AG04450 (cell line): ENCODE measurements at regions of chr1 and their contacts with region 1.

Region 1: DNA sequence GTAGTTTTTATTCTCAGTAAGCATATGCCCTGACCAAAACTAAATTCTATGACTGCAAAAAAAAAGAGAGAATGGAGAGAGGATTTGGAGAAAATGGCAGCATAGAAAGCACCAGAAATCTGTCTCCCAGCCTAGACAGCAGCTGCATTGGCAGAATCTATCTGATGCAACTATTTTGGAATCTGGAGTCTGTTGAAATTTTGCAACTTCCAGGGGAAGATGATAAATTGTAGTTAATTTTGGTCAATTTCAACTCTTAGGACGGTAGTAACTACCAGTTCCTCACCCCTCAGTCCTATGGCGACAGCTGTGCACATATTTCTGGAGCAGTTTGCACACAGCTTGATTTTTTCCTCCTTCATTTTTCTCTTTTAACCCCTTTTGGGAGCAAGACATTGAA is 10.9 kb downstream of the EXO5 start:
- DNase-seq: no peak
- H3K4me3 ChIP-seq: no peak overlapping the region
- H3K27ac ChIP-seq: no peak overlapping the region
- H3K27me3 ChIP-seq: no peaks in the 10 kb centered on the region
- CTCF ChIP-seq: no peak

Region 2: GRCh38 chr1:40531381-40532061 is 12.0 kb after region 1 on chr1 and contains the start of gene ZNF684:
- CTCF ChIA-PET with region 1: interaction called, 11 read pairs
- POLR2A ChIA-PET with region 1: no interaction called
- DNase-seq: peak; percentile 85
- H3K4me3 ChIP-seq: peak within 1 kb of the TSS; percentile 89
- H3K27ac ChIP-seq: peak within 1 kb of the TSS; percentile 77
- H3K27me3 ChIP-seq: no peaks in the 10 kb centered on the region
- CTCF ChIP-seq: no peak
- polyA plus RNA-seq, gene ZNF684: 2.3 and 3.2 TPM in 2 replicates

Region 3: GRCh38 chr1:40553017-40553416 is 33.5 kb after region 1 on chr1:
- CTCF ChIA-PET with region 1: no interaction called
- POLR2A ChIA-PET with region 1: no interaction called
- DNase-seq: no peak
- H3K4me3 ChIP-seq: no peak overlapping the region
- H3K27ac ChIP-seq: no peak overlapping the region
- H3K27me3 ChIP-seq: no peaks in the 10 kb centered on the region
- CTCF ChIP-seq: no peak

Region 4: DNA sequence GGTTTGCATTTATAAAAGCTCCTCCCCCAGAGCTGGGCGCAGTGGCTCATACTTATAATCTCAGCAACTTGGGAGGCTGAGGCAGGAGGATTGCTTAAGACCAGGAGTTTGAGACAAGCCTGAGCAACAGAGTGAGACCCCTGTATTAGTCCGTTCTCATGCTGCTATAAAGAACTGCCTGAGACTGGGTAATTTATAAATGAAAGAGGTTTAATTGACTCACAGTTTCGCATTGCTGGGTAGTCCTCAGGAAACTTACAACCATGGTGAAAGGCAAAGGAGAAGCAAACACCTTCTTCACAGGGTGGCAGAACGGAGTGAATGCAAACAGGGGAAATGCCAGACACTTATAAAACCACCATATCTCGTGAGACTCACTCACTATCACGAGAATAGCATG is 64.5 kb after region 1 on chr1:
- CTCF ChIA-PET with region 1: no interaction called
- POLR2A ChIA-PET with region 1: no interaction called
- DNase-seq: no peak
- H3K4me3 ChIP-seq: no peak overlapping the region
- H3K27ac ChIP-seq: no peak overlapping the region
- H3K27me3 ChIP-seq: peaks cover 4% of the 10 kb centered on the region
- CTCF ChIP-seq: no peak